Thyroid gland (tissue), 4 donors: ENCODE measurements at regions of chr7 and their contacts with region 1.

Region 1: GRCh38 chr7:27196287-27196767 is 3.6 kb downstream of the HOXA13 start:
- DNase-seq: peak; percentile 87 to 91
- H3K4me3 ChIP-seq: no peak overlapping the region
- H3K27ac ChIP-seq: no peak overlapping the region
- H3K4me1 ChIP-seq: peaks cover 11 to 39% of the 10 kb centered on the region in 2 donors
- H3K27me3 ChIP-seq: peaks cover 75% of the 10 kb centered on the region
- CTCF ChIP-seq: peak in 5 of 6 experiments; percentile 57 to 81 (median 73)
- POLR2A ChIP-seq: no peak

Region 2: GRCh38 chr7:26993816-26994810 is 202.2 kb before region 1 on chr7:
- intact Hi-C with region 1: no loop called
- DNase-seq: no peak
- H3K4me3 ChIP-seq: no peak overlapping the region
- H3K27ac ChIP-seq: no peak overlapping the region
- H3K4me1 ChIP-seq: no peaks in the 10 kb centered on the region
- H3K27me3 ChIP-seq: no peaks in the 10 kb centered on the region
- CTCF ChIP-seq: no peak
- POLR2A ChIP-seq: no peak

Region 3: GRCh38 chr7:27025270-27025669 is 171.1 kb before region 1 on chr7:
- intact Hi-C with region 1: no loop called
- DNase-seq: no peak
- H3K4me3 ChIP-seq: no peak overlapping the region
- H3K27ac ChIP-seq: no peak overlapping the region
- H3K4me1 ChIP-seq: no peaks in the 10 kb centered on the region
- H3K27me3 ChIP-seq: no peaks in the 10 kb centered on the region
- CTCF ChIP-seq: no peak
- POLR2A ChIP-seq: no peak

Region 4: DNA sequence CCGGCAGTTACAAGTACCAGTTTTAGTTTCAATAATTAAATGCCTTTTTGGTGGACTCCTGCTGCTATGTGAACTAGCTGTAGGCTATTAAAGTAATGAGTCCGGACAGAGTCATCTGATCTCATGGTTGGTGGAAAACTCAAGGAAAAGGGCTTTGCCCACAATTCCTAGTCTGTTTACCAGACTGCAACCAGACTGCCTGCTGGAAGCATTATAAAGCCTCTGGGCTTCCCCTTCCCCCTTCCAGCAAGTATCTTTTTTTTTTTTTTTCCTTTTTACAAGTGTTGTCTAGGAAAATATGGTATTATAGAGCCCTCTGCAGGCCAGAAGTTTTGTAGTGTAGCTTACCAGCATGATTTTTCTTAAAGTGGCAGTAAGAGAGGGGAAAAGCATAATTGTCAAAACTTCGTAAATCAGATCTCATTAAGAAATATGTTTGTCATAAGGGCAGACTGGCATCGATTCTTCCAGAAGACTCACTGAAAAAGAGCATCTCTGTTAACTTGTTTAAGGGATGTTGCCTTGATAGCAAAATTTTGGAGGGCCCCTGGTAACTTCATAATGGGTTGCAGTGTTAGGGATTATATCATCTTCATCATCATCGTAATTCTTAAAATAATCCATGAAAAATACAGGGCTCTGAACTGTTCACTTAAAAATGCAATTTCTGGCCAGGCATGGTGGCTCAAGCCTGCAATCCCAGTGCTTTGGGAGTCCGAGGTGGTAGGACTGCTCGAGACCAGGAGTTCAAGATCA is 724.9 kb after region 1 on chr7:
- intact Hi-C with region 1: loop called (anchors 10 kb)
- DNase-seq: peak; percentile 15 to 18
- H3K4me3 ChIP-seq: no peak overlapping the region
- H3K27ac ChIP-seq: no peak overlapping the region
- H3K4me1 ChIP-seq: no peaks in the 10 kb centered on the region
- H3K27me3 ChIP-seq: no peaks in the 10 kb centered on the region
- CTCF ChIP-seq: peak in 4 of 6 experiments; percentile 52 to 81 (median 62)
- POLR2A ChIP-seq: no peak

Region 5: GRCh38 chr7:28020302-28020940 is 824.1 kb after region 1 on chr7:
- intact Hi-C with region 1: loop called (anchors 5 kb)
- DNase-seq: peak; percentile 57 to 62
- H3K4me3 ChIP-seq: no peak overlapping the region
- H3K27ac ChIP-seq: no peak overlapping the region
- H3K4me1 ChIP-seq: peaks cover 5 to 32% of the 10 kb centered on the region in 2 donors
- H3K27me3 ChIP-seq: no peaks in the 10 kb centered on the region
- CTCF ChIP-seq: peak; percentile 72 to 92 (median 84)
- POLR2A ChIP-seq: no peak

Region 6: DNA sequence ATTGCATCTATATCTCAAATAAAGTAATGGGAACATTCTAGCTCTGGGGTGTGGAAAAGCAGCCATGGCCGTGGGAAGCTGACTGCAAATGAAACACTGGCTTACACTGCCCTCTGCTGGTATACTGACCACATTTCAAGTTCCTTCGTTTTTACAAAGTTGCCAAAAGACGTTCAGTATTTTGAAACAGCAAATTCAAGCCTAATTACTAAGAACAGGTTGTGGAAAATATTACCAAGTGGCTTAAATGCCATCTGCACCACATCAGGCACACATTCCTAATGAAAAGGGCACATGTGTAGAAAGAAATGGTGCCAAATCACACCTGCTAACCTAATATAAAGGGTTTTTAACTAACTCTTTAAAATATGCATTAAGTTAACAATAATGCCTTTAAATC is 900.4 kb after region 1 on chr7:
- intact Hi-C with region 1: loop called (anchors 10 kb)
- DNase-seq: peak; percentile 45 to 46
- H3K4me3 ChIP-seq: no peak overlapping the region
- H3K27ac ChIP-seq: no peak overlapping the region
- H3K4me1 ChIP-seq: peaks cover 0 to 8% of the 10 kb centered on the region in 2 donors
- H3K27me3 ChIP-seq: no peaks in the 10 kb centered on the region
- CTCF ChIP-seq: peak; percentile 58 to 86 (median 78)
- POLR2A ChIP-seq: no peak